Caco-2 (cell line): ENCODE measurements at regions of chr17 and their contacts with region 1.

Region 1: DNA sequence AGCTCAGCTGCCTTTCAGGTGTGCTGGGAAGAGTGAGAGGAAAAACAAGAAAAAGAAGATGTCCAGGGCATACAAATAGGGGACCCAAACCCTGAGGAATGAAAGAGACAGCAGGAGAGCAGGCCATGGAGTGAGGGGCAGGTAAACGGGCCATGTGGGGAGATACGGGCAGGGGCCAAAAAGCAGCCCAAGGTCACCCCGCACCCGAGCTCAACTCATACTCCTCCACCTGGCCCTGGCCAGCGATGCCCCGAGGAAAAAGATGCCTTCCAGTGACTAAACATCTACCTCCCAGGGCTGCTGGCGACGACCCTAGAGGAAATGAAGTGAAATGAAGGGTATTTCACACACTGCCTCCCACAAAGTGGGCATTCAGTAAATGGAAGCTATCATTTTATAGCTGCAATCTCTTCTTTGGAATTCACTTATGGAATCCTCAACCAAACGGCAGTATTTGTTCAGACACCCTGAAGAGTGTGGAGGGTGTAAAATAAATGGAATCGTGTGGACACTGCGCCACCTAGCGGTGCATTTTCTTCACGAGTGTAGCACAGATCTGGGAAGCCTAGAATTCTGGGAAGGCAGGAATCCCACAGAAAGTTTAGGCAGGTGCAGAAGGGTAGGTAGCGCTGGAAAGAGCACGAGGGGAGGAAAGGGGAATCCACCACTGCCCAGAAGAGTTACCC is 14.9 kb downstream of the ELAC2 start:
- DNase-seq: peak; percentile 49 to 51
- H3K4me3 ChIP-seq: no peak overlapping the region
- H3K4me3 Mint-ChIP-seq: no peak overlapping the region
- H3K27ac Mint-ChIP-seq: no peak overlapping the region
- H3K4me1 ChIP-seq: no peaks in the 10 kb centered on the region
- H3K4me1 Mint-ChIP-seq: no peaks in the 10 kb centered on the region
- H3K27me3 ChIP-seq: no peaks in the 10 kb centered on the region
- H3K27me3 Mint-ChIP-seq: no peaks in the 10 kb centered on the region
- CTCF ChIP-seq: peak; percentile 37 to 72

Region 2: DNA sequence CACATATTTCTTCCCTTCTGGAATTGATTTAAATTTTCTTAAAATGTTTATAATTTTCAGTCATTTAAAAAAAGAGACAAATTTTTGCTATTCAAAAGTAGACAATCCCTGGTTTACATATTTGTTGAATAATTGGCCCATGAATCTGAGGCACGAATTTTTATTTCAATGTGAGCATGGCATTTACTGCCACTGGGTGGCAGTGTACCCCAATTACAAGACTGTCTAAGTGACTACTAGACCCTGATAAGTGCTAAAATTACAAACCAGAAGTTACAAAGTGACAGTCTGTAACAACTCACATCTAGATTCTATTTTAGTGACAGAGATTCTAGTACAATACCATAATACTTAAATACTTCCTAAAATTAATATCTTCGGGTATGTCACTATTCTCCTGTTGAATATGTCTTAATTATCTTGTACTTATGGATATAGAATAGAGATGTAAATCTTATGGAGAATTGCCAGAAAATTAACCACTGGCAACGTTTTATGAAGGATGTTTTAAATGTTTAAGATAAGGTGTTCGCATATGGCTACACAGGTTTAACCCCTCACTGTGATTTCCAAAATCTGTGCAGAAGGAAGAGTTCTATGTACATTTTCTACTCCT is 746.4 kb before region 1 on chr17:
- CTCF ChIA-PET with region 1: no interaction called
- POLR2A ChIA-PET with region 1: no interaction called
- intact Hi-C with region 1: loop called (anchors 10 kb)
- DNase-seq: peak in 1 of 2 experiments; percentile 23
- H3K4me3 ChIP-seq: no peak overlapping the region
- H3K4me3 Mint-ChIP-seq: no peak overlapping the region
- H3K27ac Mint-ChIP-seq: no peak overlapping the region
- H3K4me1 ChIP-seq: no peaks in the 10 kb centered on the region
- H3K4me1 Mint-ChIP-seq: no peaks in the 10 kb centered on the region
- H3K27me3 ChIP-seq: no peaks in the 10 kb centered on the region; the same call in 1 of the 2 replicates
- H3K27me3 Mint-ChIP-seq: no peaks in the 10 kb centered on the region
- CTCF ChIP-seq: peak in 1 of 2 experiments; percentile 50

Region 3: DNA sequence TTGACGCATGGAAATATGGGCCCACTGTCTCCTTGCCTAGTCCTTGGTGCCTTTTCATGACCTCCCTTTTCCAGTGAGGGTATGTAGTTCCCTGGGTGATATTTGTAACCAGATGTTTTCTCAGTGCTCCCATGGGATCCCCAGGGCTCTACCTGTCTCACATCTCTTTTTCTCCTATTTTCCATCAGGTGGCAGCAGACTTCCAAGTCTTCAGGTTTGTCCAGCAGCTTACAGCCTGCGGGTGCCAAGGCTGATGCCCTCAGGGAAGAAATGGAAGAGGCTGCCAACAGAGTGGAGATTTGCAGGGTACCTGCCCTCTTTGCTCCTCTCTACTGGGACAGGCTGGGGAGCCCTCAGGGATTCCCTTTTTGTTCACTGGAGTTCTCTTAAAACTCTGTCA is 74.2 kb before region 1 on chr17:
- CTCF ChIA-PET with region 1: no interaction called
- POLR2A ChIA-PET with region 1: no interaction called
- intact Hi-C with region 1: loop called (anchors 2 kb)
- DNase-seq: peak in 1 of 2 experiments; percentile 1
- H3K4me3 ChIP-seq: no peak overlapping the region
- H3K4me3 Mint-ChIP-seq: no peak overlapping the region
- H3K27ac Mint-ChIP-seq: no peak overlapping the region
- H3K4me1 ChIP-seq: no peaks in the 10 kb centered on the region
- H3K4me1 Mint-ChIP-seq: no peaks in the 10 kb centered on the region
- H3K27me3 ChIP-seq: no peaks in the 10 kb centered on the region
- H3K27me3 Mint-ChIP-seq: no peaks in the 10 kb centered on the region
- CTCF ChIP-seq: peak in 1 of 2 experiments; percentile 29

Region 4: DNA sequence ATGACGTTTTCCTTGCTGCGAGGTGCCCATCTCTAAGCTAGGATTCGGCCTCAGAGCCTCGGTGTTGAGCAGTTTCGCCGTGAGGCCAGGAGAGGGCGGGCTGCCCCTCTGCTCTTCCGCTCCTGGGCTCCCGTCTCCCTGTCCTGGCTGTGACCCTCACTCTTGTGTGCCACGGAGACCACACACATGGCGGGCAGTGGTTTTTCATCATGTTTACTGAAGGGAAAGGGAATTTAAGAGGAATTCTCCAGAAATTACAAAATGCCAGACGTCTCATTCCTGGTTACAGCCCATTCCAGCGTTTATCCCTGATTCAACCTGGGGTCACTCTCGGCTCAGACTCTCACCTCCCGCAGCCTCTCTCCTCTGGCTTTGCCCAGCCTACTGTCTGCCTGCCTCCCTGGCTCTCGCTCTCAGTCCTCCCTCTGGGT is 111.7 kb after region 1 on chr17:
- CTCF ChIA-PET with region 1: no interaction called
- POLR2A ChIA-PET with region 1: no interaction called
- intact Hi-C with region 1: no loop called
- DNase-seq: peak in 1 of 2 experiments; percentile 2
- H3K4me3 ChIP-seq: no peak overlapping the region
- H3K4me3 Mint-ChIP-seq: no peak overlapping the region
- H3K27ac Mint-ChIP-seq: no peak overlapping the region
- H3K4me1 ChIP-seq: no peaks in the 10 kb centered on the region
- H3K4me1 Mint-ChIP-seq: no peaks in the 10 kb centered on the region
- H3K27me3 ChIP-seq: no peaks in the 10 kb centered on the region
- H3K27me3 Mint-ChIP-seq: no peaks in the 10 kb centered on the region
- CTCF ChIP-seq: peak; percentile 9 to 17